Common myeloid progenitor, CD34-positive (primary cell): ENCODE measurements at regions of chr6 and their contacts with region 1.

Region 1: DNA sequence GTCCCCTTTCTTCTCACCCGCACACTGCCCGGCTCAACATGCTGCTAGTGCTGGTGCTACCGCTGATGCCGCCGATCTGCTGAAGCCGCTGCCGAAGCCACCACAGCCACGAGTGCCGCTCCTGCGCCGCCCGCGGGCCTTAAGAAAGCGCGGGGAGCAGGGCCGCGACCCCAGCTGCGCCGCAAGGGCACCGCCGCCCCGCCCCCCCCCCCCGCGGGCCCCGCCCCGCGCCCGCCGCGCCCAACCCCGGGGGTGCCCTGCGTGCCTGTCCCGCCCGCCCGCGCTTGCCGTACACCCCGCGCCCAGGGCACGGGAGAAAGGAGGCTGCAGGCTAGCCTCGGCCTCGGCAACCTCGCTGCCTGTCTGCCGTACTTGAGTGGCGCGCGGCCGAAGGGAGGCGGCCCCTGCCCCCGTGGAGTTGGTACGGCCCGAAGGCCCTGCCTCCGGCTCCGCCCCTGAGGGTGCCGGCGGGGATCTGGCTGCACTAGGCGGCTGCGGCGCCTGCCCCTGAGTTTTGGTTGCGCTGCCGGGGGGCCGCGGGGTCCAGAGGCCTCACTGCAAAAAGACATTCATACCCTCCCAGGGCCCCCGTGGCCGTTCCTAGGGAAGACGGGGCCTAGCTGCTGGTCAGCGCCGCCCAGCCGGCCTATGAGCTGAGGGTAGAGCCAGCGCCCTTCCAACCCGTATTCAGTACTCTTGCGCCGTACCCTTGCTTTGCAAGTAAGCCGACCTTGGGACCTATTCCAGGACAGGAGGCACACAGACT is at the start of gene SOD2:
- DNase-seq: peak; percentile 86 to 95 (median 92)
- H3K4me3 ChIP-seq: peak within 1 kb of the TSS; percentile 81 to 94 (median 86)
- H3K27ac ChIP-seq: peak within 1 kb of the TSS; percentile 87 to 90
- H3K4me1 ChIP-seq: peaks cover 23 to 75% (median 38%) of the 10 kb centered on the region in 4 experiments
- H3K27me3 ChIP-seq: no peaks in the 10 kb centered on the region

Region 2: DNA sequence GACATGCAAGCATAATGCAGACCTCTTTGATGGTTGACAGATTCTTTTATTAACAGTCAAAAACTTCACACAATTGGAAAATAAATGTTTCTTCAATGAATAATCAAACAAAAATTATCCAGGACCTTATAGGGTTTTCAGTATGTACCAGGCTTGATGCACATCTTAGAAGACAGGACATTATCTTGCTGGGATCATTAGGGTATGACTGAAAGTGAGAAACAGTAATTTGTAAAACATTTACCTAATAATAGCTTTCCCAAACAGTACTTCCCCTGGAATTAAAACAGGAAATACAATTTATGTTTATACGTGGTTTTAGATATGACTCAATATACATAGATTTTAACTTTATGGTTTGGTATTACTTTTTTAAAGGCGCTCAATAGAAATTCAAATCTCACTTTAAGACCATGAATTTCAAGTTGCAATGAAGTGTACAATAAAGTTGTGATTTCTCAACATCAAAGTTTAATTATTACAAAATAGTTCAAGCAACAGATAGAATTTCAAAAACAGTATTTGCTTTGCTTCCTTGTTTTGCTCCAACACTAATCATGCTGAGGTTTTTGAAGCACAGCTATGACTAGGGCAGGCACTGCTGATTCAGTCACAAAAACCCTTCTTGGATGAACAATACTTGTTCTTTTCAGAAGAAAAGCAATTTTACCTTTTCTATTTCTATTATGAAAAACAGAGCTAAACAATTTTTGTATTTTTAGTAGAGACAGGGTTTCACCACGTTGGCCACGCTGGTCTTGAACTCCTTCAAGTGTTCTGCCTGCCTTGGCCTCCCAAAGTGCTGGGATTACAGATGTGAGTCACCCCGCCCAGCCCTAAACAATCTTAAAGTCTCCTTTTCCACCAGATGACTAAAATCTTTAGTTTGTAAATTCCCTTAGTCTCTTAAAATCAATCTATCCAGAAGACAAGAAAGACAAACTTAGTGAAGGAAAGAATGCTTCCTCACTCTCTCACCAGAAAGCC is 13.9 kb before region 1 on chr6:
- CTCF ChIA-PET with region 1: interaction called, 28 read pairs
- POLR2A ChIA-PET with region 1: interaction called, 3 read pairs
- DNase-seq: no peak
- H3K4me3 ChIP-seq: no peak overlapping the region
- H3K27ac ChIP-seq: no peak overlapping the region
- H3K4me1 ChIP-seq: peaks cover 3 to 36% (median 15%) of the 10 kb centered on the region in 4 experiments
- H3K27me3 ChIP-seq: no peaks in the 10 kb centered on the region

Region 3: DNA sequence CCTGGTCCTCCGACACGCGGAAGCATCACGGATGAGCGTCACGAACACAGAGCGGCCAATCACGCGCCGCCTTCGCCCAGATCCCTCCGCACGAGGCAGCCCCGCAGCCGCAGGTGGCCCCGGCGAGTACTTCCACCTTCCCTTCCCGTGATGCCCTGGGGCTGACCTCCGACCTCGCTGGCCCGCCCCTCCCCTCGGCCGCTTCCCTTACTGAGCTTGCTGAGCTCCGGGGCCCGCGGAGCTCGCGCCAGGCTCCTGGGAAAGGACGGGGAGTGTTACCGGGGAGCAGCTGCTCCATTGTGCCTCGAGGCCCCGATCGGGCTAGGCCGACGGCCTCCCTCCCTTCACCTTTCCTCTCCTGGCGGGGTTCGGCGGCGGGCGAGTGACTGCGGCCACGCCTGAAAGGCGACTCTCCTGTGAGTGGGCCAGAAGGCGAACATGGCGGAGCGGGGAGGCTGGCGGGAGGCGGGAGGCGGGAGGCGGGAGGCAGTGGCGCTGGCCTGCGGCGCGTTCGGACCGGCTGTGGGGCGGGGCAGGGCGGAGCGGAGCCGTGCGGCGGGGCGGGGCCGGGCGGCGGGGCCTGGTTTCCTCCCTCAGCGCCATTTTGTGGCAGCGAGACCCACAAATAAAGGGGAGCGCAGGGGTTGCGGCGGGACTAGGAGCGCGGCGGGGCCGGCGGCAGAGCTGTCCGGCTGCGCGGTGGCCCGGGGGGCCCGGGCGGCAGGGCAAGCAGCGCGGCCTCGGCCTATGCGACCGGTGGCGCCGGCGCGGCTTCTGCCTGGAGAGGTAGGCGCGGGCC is 33.8 kb after region 1 on chr6 and contains the start of gene WTAP:
- CTCF ChIA-PET with region 1: interaction called, 41 read pairs
- POLR2A ChIA-PET with region 1: interaction called, 46 read pairs
- DNase-seq: peak; percentile 97 to 98 (median 98)
- H3K4me3 ChIP-seq: peak within 1 kb of the TSS; percentile 83 to 99 (median 91)
- H3K27ac ChIP-seq: peak within 1 kb of the TSS; percentile 95 to 96
- H3K4me1 ChIP-seq: peaks cover 20 to 41% (median 27%) of the 10 kb centered on the region in 4 experiments
- H3K27me3 ChIP-seq: no peaks in the 10 kb centered on the region

Region 4: GRCh38 chr6:159746759-159747158 is 53.4 kb after region 1 on chr6:
- CTCF ChIA-PET with region 1: interaction called, 12 read pairs
- POLR2A ChIA-PET with region 1: interaction called, 3 read pairs
- DNase-seq: no peak
- H3K4me3 ChIP-seq: no peak overlapping the region
- H3K27ac ChIP-seq: no peak overlapping the region
- H3K4me1 ChIP-seq: no peaks in the 10 kb centered on the region
- H3K27me3 ChIP-seq: no peaks in the 10 kb centered on the region

Region 5: GRCh38 chr6:159789377-159790148 is 96.3 kb after region 1 on chr6 and contains the start of gene TCP1:
- CTCF ChIA-PET with region 1: interaction called, 20 read pairs
- POLR2A ChIA-PET with region 1: interaction called, 7 read pairs
- DNase-seq: peak; percentile 99 to 100 (median 100)
- H3K4me3 ChIP-seq: peak within 1 kb of the TSS; percentile 66 to 97 (median 94)
- H3K27ac ChIP-seq: peak within 1 kb of the TSS; percentile 79 to 91
- H3K4me1 ChIP-seq: peaks cover 18 to 44% (median 29%) of the 10 kb centered on the region in 4 experiments
- H3K27me3 ChIP-seq: no peaks in the 10 kb centered on the region